Common myeloid progenitor, CD34-positive (primary cell): ENCODE measurements at regions of chr16 and their contacts with region 1.

Region 1: DNA sequence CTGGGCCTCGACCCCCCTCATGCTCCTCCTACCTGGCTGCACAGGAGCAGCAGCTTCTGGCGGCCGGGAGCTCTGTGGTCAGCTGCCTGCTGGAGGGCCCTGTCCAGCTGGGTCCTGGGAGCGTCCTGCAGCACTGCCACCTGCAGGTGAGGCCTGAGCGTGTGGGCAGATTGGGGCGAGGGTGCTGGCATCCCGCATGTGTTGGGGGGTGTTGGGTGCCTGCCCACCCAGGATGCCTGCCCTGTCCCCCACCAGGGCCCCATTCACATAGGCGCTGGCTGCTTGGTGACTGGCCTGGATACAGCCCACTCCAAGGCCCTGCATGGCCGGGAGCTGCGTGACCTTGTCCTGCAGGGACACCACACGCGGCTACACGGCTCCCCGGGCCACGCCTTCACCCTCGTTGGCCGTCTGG is 16.5 kb downstream of the FCSK start:
- DNase-seq: no peak
- H3K4me3 ChIP-seq: no peak overlapping the region
- H3K27ac ChIP-seq: no peak overlapping the region
- H3K4me1 ChIP-seq: no peaks in the 10 kb centered on the region
- H3K27me3 ChIP-seq: no peaks in the 10 kb centered on the region

Region 2: GRCh38 chr16:70395345-70395901 is 75.5 kb before region 1 on chr16:
- CTCF ChIA-PET with region 1: interaction called, 22 read pairs
- POLR2A ChIA-PET with region 1: no interaction called
- DNase-seq: peak; percentile 53 to 67 (median 61)
- H3K4me3 ChIP-seq: no peak overlapping the region
- H3K27ac ChIP-seq: no peak overlapping the region
- H3K4me1 ChIP-seq: no peaks in the 10 kb centered on the region
- H3K27me3 ChIP-seq: no peaks in the 10 kb centered on the region

Region 3: DNA sequence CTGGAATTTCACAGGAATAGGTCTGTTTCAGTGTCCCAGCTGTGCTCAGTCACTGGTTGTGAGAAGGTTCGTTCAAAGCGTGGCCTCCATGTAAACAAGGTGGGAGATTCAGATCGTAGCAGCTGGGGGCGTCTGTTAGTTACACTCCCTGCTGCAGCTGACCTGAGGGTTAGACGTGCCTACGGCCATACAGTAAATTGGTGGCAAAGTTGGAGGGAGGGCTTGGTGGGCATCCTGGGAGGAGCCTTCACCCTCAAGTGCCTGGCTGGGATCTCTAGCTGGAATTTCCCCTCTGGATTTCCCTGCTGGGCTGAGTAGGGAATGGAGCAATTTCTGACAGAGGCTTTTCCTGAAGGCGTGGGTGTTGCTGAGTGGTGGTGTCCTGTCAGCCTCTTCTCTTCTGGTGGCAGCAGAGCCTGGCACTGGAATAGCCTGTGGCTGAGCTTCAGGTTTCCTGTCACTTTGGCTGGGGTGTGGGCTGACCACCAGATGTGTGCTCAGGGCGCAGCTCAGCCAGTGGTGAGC is 10.1 kb before region 1 on chr16:
- CTCF ChIA-PET with region 1: interaction called, 10 read pairs
- POLR2A ChIA-PET with region 1: no interaction called
- DNase-seq: peak in 1 of 3 donors; percentile 19
- H3K4me3 ChIP-seq: peak overlapping the region in 1 of 7 experiments; percentile 25
- H3K27ac ChIP-seq: no peak overlapping the region
- H3K4me1 ChIP-seq: peaks cover 0 to 14% (median 3%) of the 10 kb centered on the region in 4 experiments
- H3K27me3 ChIP-seq: no peaks in the 10 kb centered on the region

Region 4: DNA sequence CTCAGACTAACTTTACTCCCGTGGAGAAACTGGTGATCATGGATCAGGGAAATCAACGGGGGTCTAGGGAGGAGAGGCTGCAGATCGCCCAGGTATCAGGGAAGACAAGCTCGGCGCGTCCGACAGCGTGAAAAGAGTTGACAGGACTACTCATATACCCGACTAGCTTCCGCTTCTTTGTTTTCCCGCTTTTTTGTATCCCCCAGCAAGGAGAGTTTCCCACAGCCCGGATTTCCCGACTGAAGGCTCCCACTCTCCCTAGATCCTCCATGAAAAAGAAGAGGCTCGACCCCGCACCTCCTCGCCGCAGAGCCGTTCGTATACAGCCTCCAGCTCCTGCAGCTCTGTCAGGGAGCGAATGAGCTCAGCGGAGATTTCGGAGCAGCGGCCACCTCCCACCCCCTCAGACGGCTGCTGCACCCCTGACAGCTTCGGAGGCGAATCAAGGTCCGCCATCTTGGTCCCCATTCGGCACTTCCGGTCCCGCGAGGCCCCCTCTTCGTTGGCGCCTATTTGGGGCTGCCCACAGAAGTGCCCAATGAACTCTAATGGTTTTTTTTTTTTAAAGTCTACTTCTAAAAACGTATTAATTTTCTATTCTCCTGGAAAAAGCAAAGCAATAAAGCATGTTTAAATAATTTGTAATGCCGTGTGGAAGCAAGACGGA is 52.3 kb after region 1 on chr16 and contains the start of gene COG4:
- CTCF ChIA-PET with region 1: no interaction called
- POLR2A ChIA-PET with region 1: no interaction called
- DNase-seq: peak; percentile 93 to 95 (median 95)
- H3K4me3 ChIP-seq: peak within 1 kb of the TSS; percentile 86 to 98 (median 90)
- H3K27ac ChIP-seq: peak within 1 kb of the TSS; percentile 96 to 98
- H3K4me1 ChIP-seq: peaks cover 13 to 57% (median 36%) of the 10 kb centered on the region in 4 experiments
- H3K27me3 ChIP-seq: no peaks in the 10 kb centered on the region

Region 5: GRCh38 chr16:70610273-70611223 is 139.6 kb after region 1 on chr16:
- CTCF ChIA-PET with region 1: no interaction called
- POLR2A ChIA-PET with region 1: no interaction called
- DNase-seq: no peak
- H3K4me3 ChIP-seq: no peak overlapping the region
- H3K27ac ChIP-seq: no peak overlapping the region
- H3K4me1 ChIP-seq: no peaks in the 10 kb centered on the region
- H3K27me3 ChIP-seq: no peaks in the 10 kb centered on the region